Heart left ventricle (tissue), 16 donors: ENCODE measurements at regions of chr10 and their contacts with region 1.

Region 1: DNA sequence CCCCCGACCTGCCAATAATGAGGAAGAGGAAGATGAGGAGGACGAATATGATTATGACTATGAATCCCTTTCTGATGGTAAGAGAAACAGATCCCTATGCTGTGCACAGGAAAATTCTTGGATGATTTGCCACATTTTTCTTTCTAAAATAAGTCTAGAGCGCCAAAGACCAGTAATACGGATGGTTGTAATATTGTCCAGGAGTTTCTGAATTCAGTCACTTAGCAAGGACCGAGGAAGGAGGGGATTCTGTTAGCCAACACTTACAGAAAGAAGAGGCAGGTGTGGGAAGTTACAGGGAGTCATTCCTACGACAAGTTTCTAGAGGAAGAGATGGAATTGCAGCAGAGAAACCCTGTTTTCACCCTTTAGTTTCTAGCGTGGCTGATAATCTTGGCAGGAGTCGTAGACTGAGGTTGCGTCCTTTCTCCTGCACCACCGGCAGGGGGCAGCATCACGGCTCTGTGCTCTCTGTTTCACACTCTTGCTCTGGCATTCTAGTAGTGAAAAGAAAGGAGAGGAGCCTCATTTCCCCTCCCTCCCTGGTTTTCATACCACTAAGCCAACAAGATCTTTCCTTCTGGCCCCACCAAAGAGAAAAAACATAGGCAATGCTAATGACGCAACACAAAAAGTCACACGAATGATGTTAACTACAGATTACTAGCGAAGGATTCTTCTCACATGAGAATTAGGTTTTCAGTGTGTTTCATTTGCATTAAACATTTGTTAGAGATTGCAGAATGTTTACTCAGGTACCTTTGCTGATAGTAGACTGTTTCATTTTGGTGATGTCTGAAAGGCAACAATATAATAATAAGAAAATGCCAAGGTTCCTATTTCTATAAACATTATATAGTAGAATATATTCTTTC is 82.7 kb downstream of the NOC3L start:
- DNase-seq: peak in 4 of 5 donors; percentile 36 to 74 (median 54)
- ATAC-seq: peak; percentile 59 to 76 (median 72)
- H3K4me3 ChIP-seq: no peak overlapping the region
- H3K27ac ChIP-seq: no peak overlapping the region
- H3K4me1 ChIP-seq: peaks cover 0 to 22% (median 7%) of the 10 kb centered on the region in 12 donors
- H3K27me3 ChIP-seq: no peaks in the 10 kb centered on the region
- CTCF ChIP-seq: peak; percentile 74 to 94 (median 88)
- POLR2A ChIP-seq: no peak

Region 2: GRCh38 chr10:94315024-94315451 is 35.0 kb after region 1 on chr10:
- intact Hi-C with region 1: loop called in 3 of 10 experiments (anchors 1 to 5 kb)
- DNase-seq: no peak
- ATAC-seq: peak in 2 of 4 donors; percentile 11 to 47
- H3K4me3 ChIP-seq: no peak overlapping the region
- H3K27ac ChIP-seq: peak overlapping the region in 6 of 12 donors; percentile 2 to 45 (median 24)
- H3K4me1 ChIP-seq: peaks cover 0 to 24% (median 0%) of the 10 kb centered on the region in 12 donors
- H3K27me3 ChIP-seq: no peaks in the 10 kb centered on the region
- CTCF ChIP-seq: no peak
- POLR2A ChIP-seq: no peak

Region 3: DNA sequence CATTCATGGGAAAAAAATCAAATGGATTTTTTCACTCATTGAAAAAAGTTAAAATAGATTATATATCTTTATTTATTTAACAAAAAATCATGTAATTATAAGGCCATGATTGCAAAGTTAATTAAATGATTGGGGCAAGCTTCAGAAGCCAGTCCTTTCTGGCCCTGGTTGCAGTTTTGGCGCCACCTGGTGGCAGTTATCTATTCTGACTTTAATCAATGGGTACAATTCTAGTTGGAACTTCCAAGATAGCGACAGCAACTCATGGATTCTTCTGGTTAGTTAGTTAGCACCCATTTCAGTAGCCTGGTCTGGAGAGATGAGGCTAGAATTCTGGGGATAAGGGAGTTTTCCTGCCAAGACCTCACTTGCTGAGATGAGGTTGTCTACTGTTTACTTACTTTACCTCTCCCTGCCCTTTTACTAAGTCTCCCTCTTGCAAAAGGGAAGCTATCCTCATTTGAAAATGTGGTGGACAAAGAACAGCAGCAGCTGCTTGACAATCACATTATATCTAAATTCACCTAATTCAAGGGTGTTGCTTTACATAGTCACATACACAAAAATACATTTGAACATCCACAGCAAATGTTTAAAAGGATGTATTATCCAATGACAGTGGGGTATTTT is 40.3 kb after region 1 on chr10:
- intact Hi-C with region 1: loop called in 3 of 10 experiments (anchors 1 to 5 kb)
- DNase-seq: peak; percentile 57 to 73 (median 69)
- ATAC-seq: peak in 3 of 4 donors; percentile 43 to 63 (median 51)
- H3K4me3 ChIP-seq: no peak overlapping the region
- H3K27ac ChIP-seq: no peak overlapping the region
- H3K4me1 ChIP-seq: peaks cover 0 to 13% (median 0%) of the 10 kb centered on the region in 12 donors
- H3K27me3 ChIP-seq: no peaks in the 10 kb centered on the region
- CTCF ChIP-seq: peak; percentile 81 to 94 (median 88)
- POLR2A ChIP-seq: no peak